GM18951 (cell line): ENCODE measurements at regions of chr1 and their contacts with region 1.

Region 1: GRCh38 chr1:89358287-89358893 is 5.5 kb upstream of the GBP6 start:
- POLR2A ChIP-seq: no peak

Region 2: DNA sequence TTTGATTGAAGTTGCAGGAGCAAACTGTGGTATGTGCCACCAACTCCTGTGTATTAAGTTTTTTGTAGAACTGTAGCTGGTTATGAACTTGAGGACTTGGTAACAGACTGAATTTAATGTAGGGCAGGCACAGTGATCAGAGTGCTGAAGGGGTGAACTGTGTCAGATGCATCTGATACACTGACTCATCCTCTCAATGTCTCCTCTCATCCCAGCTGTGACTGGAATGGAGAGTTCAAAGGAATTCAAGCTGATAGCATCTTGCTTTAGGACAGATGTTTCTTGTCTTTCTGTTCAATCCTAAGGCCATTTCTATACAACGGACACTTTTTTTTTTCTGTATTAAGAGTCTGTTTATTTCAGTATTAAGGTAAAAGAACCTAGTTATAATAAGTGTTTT is 268.4 kb before region 1 on chr1:
- in situ Hi-C with region 1: loop called (anchors 10 kb)
- POLR2A ChIP-seq: no peak

Region 3: DNA sequence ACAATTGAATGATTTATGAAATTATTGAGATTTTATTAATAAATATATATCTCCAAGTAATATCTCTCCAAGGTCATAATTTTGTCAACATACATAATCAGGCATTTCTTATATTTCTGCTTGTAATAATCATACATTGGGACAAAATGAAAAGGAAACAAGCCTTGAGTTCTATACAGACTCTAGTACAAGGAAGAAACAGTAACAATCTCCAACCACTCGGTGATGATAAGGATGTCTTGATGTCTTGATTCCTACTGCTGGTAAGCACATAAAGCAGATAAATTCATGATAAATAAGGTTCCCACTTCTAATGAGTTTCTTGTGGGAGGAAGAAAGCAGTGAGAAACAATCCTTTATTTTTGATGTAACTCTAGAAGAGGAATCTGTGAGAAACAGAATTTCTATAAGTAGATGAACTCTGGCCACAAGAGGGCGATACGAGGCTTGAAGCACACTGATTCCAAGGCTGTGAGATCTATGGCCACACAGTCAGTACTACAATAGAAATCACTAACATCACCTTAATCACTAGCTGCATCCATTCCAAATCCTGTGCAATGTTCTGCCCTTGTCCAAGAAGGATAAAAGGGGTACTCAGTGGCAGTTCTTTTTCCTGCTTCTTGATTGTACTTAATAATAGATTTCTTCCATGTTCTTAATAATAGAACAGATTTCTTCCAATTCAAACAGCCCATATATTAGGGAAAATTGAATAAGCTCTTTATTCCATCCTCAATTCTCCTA is 124.8 kb after region 1 on chr1:
- in situ Hi-C with region 1: no loop called
- POLR2A ChIP-seq: no peak